A549 (cell line): ENCODE measurements at regions of chr9 and their contacts with region 1.

Region 1: DNA sequence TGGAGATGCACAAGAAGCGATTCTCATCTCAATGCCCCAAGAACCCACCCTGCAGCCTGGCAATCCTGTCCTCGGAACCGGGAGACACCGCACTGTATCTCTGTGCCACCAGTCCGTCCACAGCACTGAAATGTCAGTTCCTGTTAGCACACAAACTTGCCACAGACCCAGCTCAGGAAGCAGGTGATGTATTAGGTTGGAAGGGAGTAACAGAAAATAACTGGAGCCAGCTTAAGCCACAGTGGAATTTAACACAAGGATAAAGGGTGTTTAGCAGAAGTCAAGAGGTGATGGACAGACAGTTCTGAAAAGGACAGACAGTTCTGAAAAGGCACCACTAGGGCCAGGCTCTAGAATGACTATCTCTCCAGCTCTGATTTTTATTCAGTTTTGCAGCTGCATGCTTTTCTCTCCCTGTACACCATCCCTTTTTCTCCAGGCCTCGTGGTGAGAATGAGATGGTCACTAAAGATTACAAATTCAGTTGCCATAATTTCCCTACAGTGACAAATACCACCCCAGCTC is 114.4 kb downstream of the ANKRD18B start:
- DNase-seq: no peak
- ATAC-seq: peak; percentile 77 to 82
- H3K4me3 ChIP-seq: no peak overlapping the region
- H3K27ac ChIP-seq: no peak overlapping the region
- H3K4me1 ChIP-seq: no peaks in the 10 kb centered on the region
- CTCF ChIP-seq: no peak
- EP300 ChIP-seq: no peak
- POLR2A ChIP-seq: no peak
- RAD21 ChIP-seq: no peak

Region 2: DNA sequence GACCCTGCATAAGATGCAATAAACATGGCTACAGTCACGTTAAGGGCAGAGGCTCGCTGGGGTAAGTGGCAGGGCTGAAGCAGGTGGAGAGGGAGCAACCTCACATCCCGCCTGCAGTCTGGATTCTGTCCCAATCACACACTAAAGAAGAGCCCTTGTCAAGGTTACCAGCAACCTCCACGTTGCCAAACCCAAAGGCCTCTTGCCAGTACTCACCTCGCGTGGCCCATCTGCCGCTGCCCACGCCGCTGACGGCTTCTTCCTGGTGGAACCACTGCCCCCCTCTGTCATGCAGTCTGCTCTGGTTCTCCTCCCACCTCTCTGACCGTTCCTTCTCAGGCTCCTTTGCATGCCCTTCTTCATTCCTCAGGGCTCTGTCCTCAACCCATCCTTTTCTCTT is 244.9 kb before region 1 on chr9:
- CTCF ChIA-PET with region 1: no interaction called
- POLR2A ChIA-PET with region 1: no interaction called
- DNase-seq: no peak
- ATAC-seq: no peak
- H3K4me3 ChIP-seq: no peak overlapping the region
- H3K27ac ChIP-seq: no peak overlapping the region; a peak in 1 of 6 replicates
- H3K4me1 ChIP-seq: peaks cover 32% of the 10 kb centered on the region
- CTCF ChIP-seq: no peak
- EP300 ChIP-seq: no peak
- POLR2A ChIP-seq: no peak
- RAD21 ChIP-seq: no peak

Region 3: GRCh38 chr9:33649463-33649862 is 11.0 kb after region 1 on chr9:
- CTCF ChIA-PET with region 1: interaction called, 11 read pairs
- POLR2A ChIA-PET with region 1: no interaction called
- DNase-seq: no peak
- ATAC-seq: no peak
- H3K4me3 ChIP-seq: no peak overlapping the region
- H3K27ac ChIP-seq: no peak overlapping the region
- H3K4me1 ChIP-seq: no peaks in the 10 kb centered on the region
- CTCF ChIP-seq: no peak
- EP300 ChIP-seq: no peak
- POLR2A ChIP-seq: no peak
- RAD21 ChIP-seq: no peak

Region 4: DNA sequence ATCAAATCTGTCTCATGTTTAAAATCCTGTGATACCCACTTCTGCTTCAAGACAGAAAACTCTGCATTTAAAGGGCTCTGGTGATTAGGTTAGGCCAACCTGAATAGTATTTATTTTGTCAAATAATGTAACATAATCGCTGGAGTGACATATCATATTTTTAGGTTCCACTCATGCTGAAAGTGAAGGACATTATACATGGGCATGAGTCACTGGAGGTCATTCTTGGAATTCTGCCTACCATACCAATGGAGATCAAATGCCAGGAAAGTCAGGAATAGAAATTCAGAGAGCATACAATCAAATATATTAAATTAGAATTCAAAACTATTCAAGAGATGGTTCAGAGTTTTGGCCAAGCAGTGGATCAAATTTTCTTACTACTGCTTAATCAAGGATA is 59.8 kb after region 1 on chr9:
- CTCF ChIA-PET with region 1: no interaction called
- POLR2A ChIA-PET with region 1: no interaction called
- DNase-seq: no peak
- ATAC-seq: no peak
- H3K4me3 ChIP-seq: no peak overlapping the region
- H3K27ac ChIP-seq: no peak overlapping the region
- H3K4me1 ChIP-seq: no peaks in the 10 kb centered on the region
- CTCF ChIP-seq: no peak
- EP300 ChIP-seq: no peak
- POLR2A ChIP-seq: no peak
- RAD21 ChIP-seq: no peak